AG04450 (cell line): ENCODE measurements at regions of chr16 and their contacts with region 1.

Region 1: GRCh38 chr16:23556881-23557778 is at the starts of genes EARS2 and UBFD1:
- DNase-seq: peak; percentile 97
- H3K4me3 ChIP-seq: peak within 1 kb of the TSS; percentile 92
- H3K27ac ChIP-seq: peak within 1 kb of the TSS; percentile 94
- H3K27me3 ChIP-seq: no peaks in the 10 kb centered on the region
- CTCF ChIP-seq: peak; percentile 87
- polyA plus RNA-seq, gene EARS2: 36.0 and 42.7 TPM in 2 replicates
- polyA plus RNA-seq, gene UBFD1: 92.4 and 101 TPM in 2 replicates

Region 2: GRCh38 chr16:23324730-23325129 is 232.4 kb before region 1 on chr16:
- CTCF ChIA-PET with region 1: no interaction called
- POLR2A ChIA-PET with region 1: no interaction called
- DNase-seq: no peak
- H3K4me3 ChIP-seq: no peak overlapping the region
- H3K27ac ChIP-seq: no peak overlapping the region
- H3K27me3 ChIP-seq: no peaks in the 10 kb centered on the region
- CTCF ChIP-seq: no peak

Region 3: GRCh38 chr16:23496826-23497542 is 60.1 kb before region 1 on chr16:
- CTCF ChIA-PET with region 1: no interaction called
- POLR2A ChIA-PET with region 1: no interaction called
- DNase-seq: no peak
- H3K4me3 ChIP-seq: no peak overlapping the region
- H3K27ac ChIP-seq: no peak overlapping the region
- H3K27me3 ChIP-seq: no peaks in the 10 kb centered on the region
- CTCF ChIP-seq: no peak

Region 4: DNA sequence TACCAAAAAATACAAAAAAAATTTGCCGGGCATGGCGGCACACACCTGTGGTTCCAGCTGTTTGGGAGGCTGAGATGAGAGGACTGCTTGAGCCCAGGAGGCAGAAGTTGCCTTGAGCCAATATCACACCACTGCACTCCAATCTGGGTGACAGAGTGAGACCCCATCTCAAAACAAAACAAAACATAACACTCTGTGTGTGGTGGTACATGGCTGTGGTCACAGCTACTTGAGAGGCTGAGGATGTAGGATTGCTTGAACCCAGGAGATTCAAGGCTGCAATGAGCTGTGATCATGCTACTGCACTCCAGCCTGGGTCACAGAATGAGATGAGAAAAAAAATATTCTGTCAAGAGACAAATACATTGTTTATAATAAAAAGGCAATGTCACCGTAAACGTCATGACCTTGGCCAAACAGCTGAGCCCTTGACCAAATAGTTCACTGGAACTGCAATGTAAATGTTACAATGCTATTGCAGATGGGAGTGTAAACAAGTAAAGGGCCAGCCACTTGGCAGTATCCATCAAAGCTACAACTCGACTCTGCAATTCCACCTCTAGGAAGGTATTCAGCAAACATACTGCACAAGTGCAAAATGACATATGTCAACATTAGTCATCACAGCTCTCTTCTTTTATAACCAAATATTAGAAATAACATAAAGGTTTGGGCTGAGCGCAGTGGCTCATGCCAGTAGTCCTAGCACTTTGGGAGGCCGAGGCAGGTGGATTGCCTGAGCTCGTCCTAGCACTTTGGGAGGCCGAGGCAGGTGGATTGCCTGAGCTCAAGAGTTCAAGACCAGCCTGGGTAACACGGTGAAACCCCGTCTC is 16.9 kb before region 1 on chr16:
- CTCF ChIA-PET with region 1: interaction called, 20 read pairs
- POLR2A ChIA-PET with region 1: interaction called, 3 read pairs
- DNase-seq: no peak
- H3K4me3 ChIP-seq: no peak overlapping the region
- H3K27ac ChIP-seq: no peak overlapping the region
- H3K27me3 ChIP-seq: no peaks in the 10 kb centered on the region
- CTCF ChIP-seq: no peak

Region 5: GRCh38 chr16:23595951-23596720 is 39.0 kb after region 1 on chr16 and contains the start of gene NDUFAB1:
- CTCF ChIA-PET with region 1: interaction called, 21 read pairs
- POLR2A ChIA-PET with region 1: no interaction called
- DNase-seq: peak; percentile 48
- H3K4me3 ChIP-seq: peak within 1 kb of the TSS; percentile 77
- H3K27ac ChIP-seq: peak within 1 kb of the TSS; percentile 21
- H3K27me3 ChIP-seq: no peaks in the 10 kb centered on the region
- CTCF ChIP-seq: peak; percentile 91
- polyA plus RNA-seq, gene NDUFAB1: 97.6 and 130 TPM in 2 replicates

Region 6: DNA sequence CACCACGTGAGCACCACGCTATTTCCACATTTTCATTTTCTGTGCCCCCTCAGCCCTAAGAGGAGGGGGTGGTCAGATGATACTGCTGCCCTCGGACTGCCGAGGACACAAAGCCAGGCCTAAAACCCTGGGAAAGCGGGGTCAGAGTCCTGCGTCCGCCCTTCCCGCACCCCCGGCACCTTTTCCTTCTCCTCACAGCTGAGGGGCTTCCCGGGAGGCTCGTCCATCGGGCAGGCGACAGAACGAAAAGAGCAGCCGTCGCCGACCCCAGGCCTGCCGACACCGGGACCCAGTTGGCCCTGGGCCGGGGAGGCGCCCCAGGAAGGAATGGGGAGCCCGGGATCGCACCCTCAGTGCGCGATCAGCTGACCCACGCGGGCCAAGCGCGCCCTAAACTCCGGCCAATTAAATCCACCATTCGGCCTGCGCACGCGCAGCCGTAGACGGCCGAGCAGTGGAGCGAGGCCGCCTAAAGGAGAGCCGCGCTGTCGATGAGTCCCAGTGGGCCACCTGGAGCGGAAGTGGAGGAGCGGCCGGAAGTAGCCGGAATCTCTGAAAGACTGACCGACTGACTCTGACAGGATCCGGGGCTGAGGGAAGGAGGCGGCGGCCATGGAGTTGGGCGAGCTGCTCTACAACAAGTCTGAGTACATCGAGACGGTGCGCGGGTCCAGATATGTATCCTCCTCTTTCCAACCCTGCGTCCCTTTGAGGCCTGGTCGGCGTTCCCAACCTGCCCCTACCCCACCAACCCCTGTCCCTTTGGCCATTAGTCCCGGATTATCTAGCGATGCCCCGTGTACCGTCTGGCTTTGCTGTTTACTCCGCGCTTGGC is 84.0 kb after region 1 on chr16 and contains the starts of genes DCTN5 and PALB2:
- CTCF ChIA-PET with region 1: interaction called, 3 read pairs
- POLR2A ChIA-PET with region 1: interaction called, 10 read pairs
- DNase-seq: peak; percentile 75
- H3K4me3 ChIP-seq: peak within 1 kb of the TSS; percentile 100
- H3K27ac ChIP-seq: peak within 1 kb of the TSS; percentile 68
- H3K27me3 ChIP-seq: no peaks in the 10 kb centered on the region
- CTCF ChIP-seq: no peak
- polyA plus RNA-seq, gene DCTN5: 86.3 and 92.1 TPM in 2 replicates
- polyA plus RNA-seq, gene PALB2: 5.3 and 6.5 TPM in 2 replicates

Region 7: DNA sequence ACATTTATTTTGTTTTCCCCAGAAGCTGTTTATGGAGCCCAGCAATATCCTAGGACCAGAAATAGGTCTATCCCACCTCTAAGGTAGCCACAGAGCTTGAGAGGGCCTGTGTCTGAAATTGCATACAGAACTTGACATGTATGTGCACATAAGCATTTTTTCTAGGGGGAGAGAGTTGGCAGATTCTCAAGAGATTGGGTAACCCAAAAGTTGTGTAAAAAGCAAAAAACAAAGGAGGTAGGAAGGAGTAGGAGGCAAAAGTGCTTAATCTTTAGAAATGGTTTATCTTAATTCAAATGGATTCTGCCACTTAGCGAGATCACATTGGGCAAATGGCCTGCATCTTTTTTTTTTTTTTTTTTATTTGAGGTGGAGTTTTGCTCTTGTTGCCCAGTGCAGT is 125.1 kb after region 1 on chr16:
- CTCF ChIA-PET with region 1: no interaction called
- POLR2A ChIA-PET with region 1: no interaction called
- DNase-seq: no peak
- H3K4me3 ChIP-seq: no peak overlapping the region
- H3K27ac ChIP-seq: no peak overlapping the region
- H3K27me3 ChIP-seq: no peaks in the 10 kb centered on the region
- CTCF ChIP-seq: no peak